Endothelial cell of umbilical vein (primary cell): ENCODE measurements at regions of chr18 and their contacts with region 1.

Region 1: DNA sequence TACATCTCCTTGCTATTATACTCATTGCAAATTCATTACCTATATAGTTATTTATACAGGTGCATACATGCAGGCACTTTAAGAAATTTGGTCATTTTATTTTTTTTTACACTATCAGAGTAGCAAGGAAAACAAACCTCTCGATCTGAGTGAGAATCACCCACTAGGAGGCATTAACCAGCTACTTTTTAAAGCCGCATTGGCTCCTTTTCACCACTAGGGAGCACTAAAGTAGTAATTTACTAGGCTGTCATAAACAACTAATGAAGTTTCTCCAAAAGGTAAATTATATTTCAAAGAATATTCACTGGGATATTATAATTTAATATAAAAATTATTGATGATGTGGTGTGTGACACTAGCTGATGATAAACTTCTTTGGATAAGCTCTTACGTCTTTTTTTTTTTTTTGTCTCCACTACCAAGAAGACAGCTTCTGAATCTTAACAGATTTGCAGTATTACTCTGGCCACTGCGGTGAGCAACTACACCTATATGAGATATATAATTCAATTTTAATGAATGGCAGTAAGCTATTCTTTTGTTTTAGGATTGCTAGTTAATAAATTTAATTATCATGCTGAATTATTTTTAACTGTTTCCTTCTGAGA is 101.9 kb downstream of the NOL4 start:
- DNase-seq: peak; percentile 56
- H3K4me3 ChIP-seq: no peak overlapping the region
- H3K27ac ChIP-seq: no peak overlapping the region
- H3K4me1 ChIP-seq: no peaks in the 10 kb centered on the region
- H3K27me3 ChIP-seq: no peaks in the 10 kb centered on the region
- CTCF ChIP-seq: peak; percentile 68
- POLR2A ChIP-seq: no peak

Region 2: DNA sequence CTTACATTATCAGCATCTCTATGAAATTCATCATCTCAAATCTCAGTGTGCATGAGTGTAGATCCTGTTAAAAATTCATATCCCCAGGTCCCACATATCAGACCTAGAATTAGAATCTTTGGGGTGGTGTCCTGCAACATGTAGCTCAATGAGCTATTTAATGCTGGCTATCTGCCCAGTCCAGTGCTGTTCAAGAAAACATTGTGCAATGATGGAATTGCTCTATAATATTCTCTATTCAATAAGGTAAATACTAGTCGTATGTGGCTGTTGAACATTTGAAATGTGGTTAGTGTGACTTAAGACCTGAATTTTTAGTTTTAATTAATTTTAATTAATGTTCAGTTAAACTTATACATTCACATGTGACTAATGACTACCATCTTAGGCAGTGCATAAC is 25.5 kb before region 1 on chr18:
- CTCF ChIA-PET with region 1: interaction called, 10 read pairs
- POLR2A ChIA-PET with region 1: no interaction called
- dilution Hi-C with region 1: no loop called
- intact Hi-C with region 1: no loop called
- DNase-seq: no peak
- H3K4me3 ChIP-seq: no peak overlapping the region
- H3K27ac ChIP-seq: no peak overlapping the region
- H3K4me1 ChIP-seq: no peaks in the 10 kb centered on the region
- H3K27me3 ChIP-seq: no peaks in the 10 kb centered on the region
- CTCF ChIP-seq: no peak
- POLR2A ChIP-seq: no peak

Region 3: GRCh38 chr18:34158881-34159690 is 36.3 kb after region 1 on chr18:
- CTCF ChIA-PET with region 1: interaction called, 14 read pairs
- POLR2A ChIA-PET with region 1: no interaction called
- dilution Hi-C with region 1: no loop called
- intact Hi-C with region 1: no loop called
- DNase-seq: peak; percentile 24
- H3K4me3 ChIP-seq: peak overlapping the region in 1 of 3 experiments; percentile 8
- H3K27ac ChIP-seq: no peak overlapping the region
- H3K4me1 ChIP-seq: no peaks in the 10 kb centered on the region
- H3K27me3 ChIP-seq: peaks cover 10 to 30% of the 10 kb centered on the region in 2 experiments
- CTCF ChIP-seq: peak in 1 of 2 donors; percentile 37
- POLR2A ChIP-seq: no peak

Region 4: DNA sequence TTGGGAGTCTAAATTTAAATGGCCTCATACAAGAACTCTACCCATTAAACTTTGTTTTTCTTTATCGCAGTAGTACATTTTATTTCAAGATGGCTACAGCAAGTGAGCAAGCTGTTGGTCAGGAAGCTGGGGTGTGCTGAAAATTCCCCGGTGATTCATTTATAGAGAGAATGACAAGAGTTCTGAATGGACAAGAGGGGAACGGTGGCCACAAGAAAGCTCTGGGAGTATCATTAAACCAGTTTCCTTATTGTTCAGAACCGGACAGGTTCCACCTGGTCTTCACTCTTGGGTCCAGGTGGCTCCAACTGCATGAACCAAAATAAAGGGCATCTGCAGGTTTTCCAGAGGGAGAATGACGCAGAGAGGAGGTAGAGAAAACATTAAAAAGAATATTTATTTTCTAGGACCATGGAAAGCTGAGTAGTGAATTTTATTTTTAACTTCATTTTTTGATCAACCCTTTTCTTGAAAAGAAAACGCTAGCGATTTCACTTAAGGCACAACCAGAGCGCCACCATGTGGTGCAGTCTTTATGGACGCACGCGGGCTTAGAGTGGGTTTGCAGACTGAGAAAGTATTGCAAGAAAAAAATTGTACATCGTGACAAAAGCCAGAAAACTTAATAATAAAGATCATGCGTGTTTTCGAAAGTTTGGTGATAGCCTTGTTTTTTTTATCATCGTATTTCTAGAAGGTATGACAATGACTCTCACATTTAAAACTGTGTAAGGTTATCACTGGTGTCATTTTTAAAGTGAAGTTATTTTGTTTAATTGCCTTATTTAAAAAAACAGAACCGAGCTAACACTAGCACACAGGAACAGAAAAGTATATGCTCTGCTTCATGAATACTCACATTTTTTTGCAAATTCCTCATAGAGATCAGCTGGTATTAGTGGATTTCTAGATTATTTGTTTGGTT is 199.8 kb after region 1 on chr18:
- CTCF ChIA-PET with region 1: interaction called, 243 read pairs
- POLR2A ChIA-PET with region 1: no interaction called
- dilution Hi-C with region 1: no loop called
- intact Hi-C with region 1: loop called (anchors 1 kb)
- DNase-seq: peak; percentile 65
- H3K4me3 ChIP-seq: no peak overlapping the region
- H3K27ac ChIP-seq: no peak overlapping the region
- H3K4me1 ChIP-seq: no peaks in the 10 kb centered on the region
- H3K27me3 ChIP-seq: peaks cover 0 to 5% of the 10 kb centered on the region in 2 experiments
- CTCF ChIP-seq: peak; percentile 66 to 71
- POLR2A ChIP-seq: no peak

Region 5: GRCh38 chr18:34787931-34788532 is 665.2 kb after region 1 on chr18:
- CTCF ChIA-PET with region 1: interaction called, 71 read pairs
- POLR2A ChIA-PET with region 1: no interaction called
- dilution Hi-C with region 1: no loop called
- intact Hi-C with region 1: no loop called
- DNase-seq: peak; percentile 80
- H3K4me3 ChIP-seq: no peak overlapping the region
- H3K27ac ChIP-seq: no peak overlapping the region
- H3K4me1 ChIP-seq: no peaks in the 10 kb centered on the region
- H3K27me3 ChIP-seq: no peaks in the 10 kb centered on the region
- CTCF ChIP-seq: peak; percentile 37 to 48
- POLR2A ChIP-seq: no peak